SK-N-SH (cell line): ENCODE measurements at regions of chr3 and their contacts with region 1.

Region 1: DNA sequence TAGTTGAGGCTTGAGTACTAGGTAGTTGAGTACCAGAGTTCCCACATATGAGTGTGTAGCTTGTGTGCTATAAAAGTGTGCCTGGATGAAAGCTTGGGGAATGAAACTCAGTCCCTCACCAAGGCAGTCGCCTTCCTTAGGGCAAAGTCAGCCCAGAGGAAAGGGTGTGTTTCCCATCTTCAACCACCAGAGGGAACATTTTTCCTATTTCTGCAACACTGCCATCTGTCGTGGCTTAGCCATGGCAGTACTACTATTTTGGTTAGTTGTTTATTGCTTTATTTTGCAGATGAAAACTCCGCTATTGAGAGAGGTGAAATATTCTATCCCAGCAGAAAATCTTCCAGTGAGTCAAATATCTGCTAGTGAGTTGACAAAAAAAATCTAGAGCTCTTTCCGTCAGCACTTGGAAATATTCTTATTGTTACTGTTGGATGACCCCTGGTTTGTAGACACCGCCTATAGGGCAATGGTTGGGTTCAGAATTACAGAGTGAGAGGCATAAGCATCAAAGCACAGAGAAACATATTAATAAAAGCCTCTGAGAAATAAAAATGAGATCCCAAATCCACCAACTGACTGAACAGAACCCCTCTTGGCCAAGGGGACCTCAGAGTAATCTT is 239.9 kb downstream of the CPNE4 start:
- DNase-seq: peak; percentile 40
- H3K4me3 ChIP-seq: no peak overlapping the region; a peak in 1 of 4 replicates
- H3K27ac ChIP-seq: no peak overlapping the region
- H3K4me1 ChIP-seq: peaks cover 0 to 15% of the 10 kb centered on the region in 2 experiments; a peak in 1 of 4 replicates
- H3K27me3 ChIP-seq: no peaks in the 10 kb centered on the region
- CTCF ChIP-seq: peak; percentile 77
- EP300 ChIP-seq: no peak
- RAD21 ChIP-seq: peak; percentile 90

Region 2: GRCh38 chr3:131033480-131034080 is 761.3 kb before region 1 on chr3:
- CTCF ChIA-PET with region 1: interaction called, 20 read pairs
- POLR2A ChIA-PET with region 1: no interaction called
- DNase-seq: peak; percentile 51
- H3K4me3 ChIP-seq: peak overlapping the region in 1 of 2 experiments; percentile 6; a peak in 1 of 4 replicates
- H3K27ac ChIP-seq: no peak overlapping the region
- H3K4me1 ChIP-seq: no peaks in the 10 kb centered on the region
- H3K27me3 ChIP-seq: no peaks in the 10 kb centered on the region
- CTCF ChIP-seq: peak; percentile 85
- EP300 ChIP-seq: no peak
- RAD21 ChIP-seq: peak; percentile 83

Region 3: GRCh38 chr3:131053043-131053859 is 741.6 kb before region 1 on chr3:
- CTCF ChIA-PET with region 1: interaction called, 10 read pairs
- POLR2A ChIA-PET with region 1: no interaction called
- DNase-seq: peak; percentile 29
- H3K4me3 ChIP-seq: no peak overlapping the region
- H3K27ac ChIP-seq: no peak overlapping the region
- H3K4me1 ChIP-seq: peaks cover 0 to 2% of the 10 kb centered on the region in 2 experiments; a peak in 1 of 4 replicates
- H3K27me3 ChIP-seq: no peaks in the 10 kb centered on the region
- CTCF ChIP-seq: peak; percentile 56
- EP300 ChIP-seq: no peak
- RAD21 ChIP-seq: peak; percentile 85

Region 4: GRCh38 chr3:131778531-131778930 is 16.3 kb before region 1 on chr3:
- CTCF ChIA-PET with region 1: interaction called, 13 read pairs
- POLR2A ChIA-PET with region 1: no interaction called
- DNase-seq: no peak
- H3K4me3 ChIP-seq: no peak overlapping the region
- H3K27ac ChIP-seq: no peak overlapping the region
- H3K4me1 ChIP-seq: no peaks in the 10 kb centered on the region
- H3K27me3 ChIP-seq: no peaks in the 10 kb centered on the region
- CTCF ChIP-seq: no peak
- EP300 ChIP-seq: no peak
- RAD21 ChIP-seq: no peak

Region 5: GRCh38 chr3:131892331-131892730 is 97.5 kb after region 1 on chr3:
- CTCF ChIA-PET with region 1: interaction called, 13 read pairs
- POLR2A ChIA-PET with region 1: no interaction called
- DNase-seq: no peak
- H3K4me3 ChIP-seq: no peak overlapping the region
- H3K27ac ChIP-seq: no peak overlapping the region
- H3K4me1 ChIP-seq: no peaks in the 10 kb centered on the region
- H3K27me3 ChIP-seq: no peaks in the 10 kb centered on the region
- CTCF ChIP-seq: peak; percentile 34; the same call in 1 of the 2 replicates
- EP300 ChIP-seq: no peak
- RAD21 ChIP-seq: no peak

Region 6: GRCh38 chr3:131933665-131934064 is 138.8 kb after region 1 on chr3:
- CTCF ChIA-PET with region 1: no interaction called
- POLR2A ChIA-PET with region 1: no interaction called
- DNase-seq: no peak
- H3K4me3 ChIP-seq: no peak overlapping the region
- H3K27ac ChIP-seq: no peak overlapping the region
- H3K4me1 ChIP-seq: no peaks in the 10 kb centered on the region
- H3K27me3 ChIP-seq: no peaks in the 10 kb centered on the region
- CTCF ChIP-seq: no peak
- EP300 ChIP-seq: no peak
- RAD21 ChIP-seq: no peak

Region 7: DNA sequence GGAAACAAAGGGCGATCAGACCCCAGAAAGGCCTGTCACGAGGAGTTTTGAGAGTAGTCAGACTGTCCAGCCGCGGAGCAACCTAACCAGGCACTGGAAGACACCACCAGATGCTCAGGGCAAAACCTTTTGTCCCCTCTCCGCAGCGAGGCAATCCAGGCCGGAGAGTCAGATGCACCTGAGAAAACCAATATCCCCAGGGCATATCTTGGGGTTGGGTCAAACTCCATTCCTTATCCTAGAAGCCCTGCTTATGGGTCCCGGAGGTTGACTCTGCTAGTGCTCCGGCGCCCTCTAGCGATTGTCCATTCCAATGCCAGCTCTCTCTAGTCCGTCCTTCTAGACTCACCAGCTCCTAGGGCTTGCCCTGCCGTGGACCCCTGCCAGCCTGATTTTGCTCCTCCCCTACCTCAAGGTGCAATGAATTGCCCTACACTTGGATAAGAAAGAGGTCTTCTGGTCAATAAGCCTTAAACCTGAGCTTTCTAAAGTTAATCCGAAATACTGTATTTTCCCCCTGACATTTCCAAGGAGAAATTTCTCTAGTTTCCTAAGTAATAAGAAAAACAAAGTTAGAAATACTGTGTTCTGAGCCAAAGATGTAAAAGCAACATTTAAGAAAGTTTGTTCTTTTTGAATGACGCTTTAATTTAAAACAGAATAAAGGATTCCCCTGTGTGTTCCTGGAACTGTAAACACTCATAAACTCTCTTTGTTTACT is 234.5 kb after region 1 on chr3:
- CTCF ChIA-PET with region 1: interaction called, 131 read pairs
- POLR2A ChIA-PET with region 1: no interaction called
- DNase-seq: peak; percentile 81
- H3K4me3 ChIP-seq: no peak overlapping the region; a peak in 1 of 4 replicates
- H3K27ac ChIP-seq: no peak overlapping the region
- H3K4me1 ChIP-seq: peaks cover 0 to 9% of the 10 kb centered on the region in 2 experiments; a peak in 1 of 4 replicates
- H3K27me3 ChIP-seq: no peaks in the 10 kb centered on the region; the same call in 1 of the 2 replicates
- CTCF ChIP-seq: peak; percentile 91
- EP300 ChIP-seq: no peak
- RAD21 ChIP-seq: peak; percentile 92